ENCODE measurements at regions of chr12 and their contacts with region 1.

Region 1: GRCh38 chr12:83823431-83823963 is 1089.1 kb downstream of the SLC6A15 start:
- DNase-seq: peak; percentile 38 to 41
- H3K4me3 ChIP-seq: no peak overlapping the region
- H3K27ac ChIP-seq: no peak overlapping the region
- H3K4me1 ChIP-seq: no peaks in the 10 kb centered on the region
- H3K27me3 ChIP-seq: no peaks in the 10 kb centered on the region
- CTCF ChIP-seq: peak; percentile 66

Region 2: DNA sequence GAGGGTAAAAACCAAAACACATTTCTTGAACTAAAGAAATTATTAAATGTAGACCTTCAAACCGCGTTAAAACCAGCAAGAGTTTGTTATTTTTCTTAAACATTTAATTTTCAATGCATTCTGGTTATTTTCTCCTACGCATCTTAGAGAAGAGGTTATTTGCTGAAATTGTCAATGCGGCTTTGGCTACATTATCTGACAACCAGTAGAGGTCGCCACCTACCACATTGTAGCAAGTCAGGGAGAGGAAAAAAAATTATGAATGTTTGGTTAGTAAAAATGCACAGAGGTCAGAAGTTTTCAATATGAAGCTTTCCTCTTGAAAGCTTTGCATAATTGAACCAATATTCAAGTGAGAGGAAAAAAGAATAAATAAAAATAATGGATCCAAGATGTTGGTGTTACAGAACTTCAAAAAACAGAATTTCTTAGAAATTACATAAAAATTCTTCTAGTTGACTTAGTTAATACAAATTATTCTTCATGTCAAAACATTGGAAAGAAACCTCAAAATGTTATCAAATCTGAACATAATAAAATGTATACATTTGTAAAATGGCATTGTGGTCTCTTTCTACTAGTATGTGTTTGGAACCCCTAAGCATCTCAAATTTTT is 1296.2 kb before region 1 on chr12:
- CTCF ChIA-PET with region 1: interaction called, 4 read pairs
- POLR2A ChIA-PET with region 1: no interaction called
- intact Hi-C with region 1: loop called (anchors 5 kb)
- DNase-seq: peak; percentile 21 to 37
- H3K4me3 ChIP-seq: no peak overlapping the region
- H3K27ac ChIP-seq: no peak overlapping the region
- H3K4me1 ChIP-seq: no peaks in the 10 kb centered on the region
- H3K27me3 ChIP-seq: no peaks in the 10 kb centered on the region
- CTCF ChIP-seq: peak; percentile 94

Region 3: DNA sequence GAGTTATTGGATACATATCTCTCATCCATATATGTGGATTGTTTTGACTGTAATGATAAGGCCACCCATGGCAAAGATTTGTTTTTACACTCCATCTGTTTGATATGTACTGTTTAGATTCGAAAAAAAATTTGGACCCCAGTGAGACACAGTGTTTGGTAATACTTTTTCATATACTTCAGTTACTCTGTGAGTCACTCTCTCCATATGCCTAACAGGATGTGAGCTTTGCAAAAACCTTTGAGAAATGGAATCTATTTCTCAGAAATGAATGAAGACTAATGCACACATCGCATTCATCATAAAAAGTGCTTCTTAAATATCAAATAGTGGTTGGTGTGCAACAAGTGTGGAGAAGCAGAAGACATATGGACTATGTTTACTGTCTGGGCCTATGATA is 307.6 kb after region 1 on chr12:
- CTCF ChIA-PET with region 1: no interaction called
- POLR2A ChIA-PET with region 1: no interaction called
- intact Hi-C with region 1: no loop called
- DNase-seq: no peak
- H3K4me3 ChIP-seq: no peak overlapping the region
- H3K27ac ChIP-seq: no peak overlapping the region
- H3K4me1 ChIP-seq: no peaks in the 10 kb centered on the region
- H3K27me3 ChIP-seq: no peaks in the 10 kb centered on the region
- CTCF ChIP-seq: no peak

Region 4: DNA sequence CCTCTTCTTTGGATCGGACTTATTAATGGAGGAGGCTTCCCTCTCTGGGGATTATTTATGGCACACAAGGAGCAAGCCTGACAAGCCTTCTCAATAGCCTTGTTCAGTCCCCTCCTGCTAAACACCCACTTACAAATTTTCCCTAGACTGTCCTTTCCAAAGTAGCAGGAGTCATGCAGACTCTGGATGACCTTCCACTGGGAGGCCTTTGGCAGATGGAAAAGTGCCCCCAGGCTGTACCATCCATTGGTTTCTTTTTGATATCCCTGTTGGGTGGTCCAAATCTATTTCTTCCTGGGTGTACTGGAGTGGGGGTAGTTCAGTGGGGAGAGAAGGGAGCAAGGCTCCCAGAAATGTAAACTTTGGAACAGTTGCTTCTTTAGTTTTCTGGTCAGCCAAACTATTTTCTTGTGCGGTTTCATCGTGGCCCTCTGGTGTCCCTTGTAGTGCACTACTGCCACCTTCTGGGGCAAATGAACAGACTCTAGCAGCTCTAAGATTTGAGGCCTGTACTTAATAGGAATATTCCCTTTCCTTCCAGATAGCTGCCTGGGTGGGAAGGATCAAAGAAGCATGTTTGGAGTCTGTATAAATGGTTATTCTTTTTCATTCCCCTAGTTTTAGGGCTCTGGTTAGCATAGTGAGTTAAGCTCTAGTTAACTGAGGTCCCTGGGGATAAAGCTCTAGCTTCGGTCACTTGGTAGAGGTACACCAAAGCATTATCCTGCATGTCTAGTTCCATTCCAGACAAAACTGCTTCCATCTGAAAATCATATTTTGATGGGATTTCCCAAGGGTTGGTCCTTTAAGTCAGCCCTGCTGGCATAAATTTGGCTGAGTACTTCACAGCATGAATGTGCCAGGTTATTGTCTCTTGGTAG is 679.6 kb after region 1 on chr12:
- CTCF ChIA-PET with region 1: no interaction called
- POLR2A ChIA-PET with region 1: no interaction called
- intact Hi-C with region 1: loop called (anchors 10 kb)
- DNase-seq: peak in 1 of 2 experiments; percentile 41
- H3K4me3 ChIP-seq: no peak overlapping the region
- H3K27ac ChIP-seq: no peak overlapping the region
- H3K4me1 ChIP-seq: peaks cover 7% of the 10 kb centered on the region
- H3K27me3 ChIP-seq: no peaks in the 10 kb centered on the region
- CTCF ChIP-seq: peak; percentile 62

Region 5: DNA sequence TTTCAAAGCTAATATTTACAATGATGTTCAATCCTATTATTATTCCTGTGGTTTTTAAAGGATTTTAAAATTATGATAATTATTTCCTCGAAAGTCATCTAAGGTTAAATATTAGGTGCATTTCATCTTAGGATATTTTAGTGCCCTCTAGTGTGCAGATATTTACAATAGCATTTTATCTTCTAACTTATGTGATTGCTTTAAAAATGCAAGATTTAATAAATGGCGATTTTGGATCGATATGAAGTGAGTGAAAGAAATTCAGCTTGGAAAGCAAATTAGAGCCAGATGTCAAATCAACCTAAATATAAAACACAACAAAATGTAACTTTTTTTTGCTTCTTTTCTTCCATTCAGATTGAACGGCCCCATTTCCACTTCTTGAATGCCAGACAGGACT is 795.6 kb after region 1 on chr12:
- CTCF ChIA-PET with region 1: no interaction called
- POLR2A ChIA-PET with region 1: no interaction called
- intact Hi-C with region 1: loop called (anchors 10 kb)
- DNase-seq: no peak
- H3K4me3 ChIP-seq: no peak overlapping the region
- H3K27ac ChIP-seq: no peak overlapping the region
- H3K4me1 ChIP-seq: no peaks in the 10 kb centered on the region
- H3K27me3 ChIP-seq: no peaks in the 10 kb centered on the region
- CTCF ChIP-seq: peak; percentile 60